ENCODE measurements at regions of chr12 and their contacts with region 1.

Region 1: GRCh38 chr12:26125400-26126339 is 833 bp upstream of the BHLHE41 start:
- DNase-seq: peak; percentile 53
- H3K4me3 Mint-ChIP-seq: peak overlapping the region; percentile 82
- H3K27ac Mint-ChIP-seq: no peak overlapping the region
- H3K4me1 Mint-ChIP-seq: peaks cover 23% of the 10 kb centered on the region
- H3K27me3 Mint-ChIP-seq: peaks cover 69% of the 10 kb centered on the region

Region 2: GRCh38 chr12:25958428-25959070 is 167.1 kb before region 1 on chr12 and contains the start of gene RASSF8:
- CTCF ChIA-PET with region 1: no interaction called
- intact Hi-C with region 1: loop called (anchors 2 kb)
- DNase-seq: peak; percentile 23
- H3K4me3 Mint-ChIP-seq: peak within 1 kb of the TSS; percentile 78
- H3K27ac Mint-ChIP-seq: no peak within 1 kb of the TSS
- H3K4me1 Mint-ChIP-seq: peaks cover 11% of the 10 kb centered on the region
- H3K27me3 Mint-ChIP-seq: peaks cover 58% of the 10 kb centered on the region
- total RNA-seq, gene RASSF8: 0.32 to 0.81 TPM

Region 3: GRCh38 chr12:26113853-26114719 is 11.6 kb before region 1 on chr12:
- CTCF ChIA-PET with region 1: interaction called, 5 read pairs
- intact Hi-C with region 1: loop called (anchors 1 kb)
- DNase-seq: peak; percentile 82
- H3K4me3 Mint-ChIP-seq: peak overlapping the region; percentile 68
- H3K27ac Mint-ChIP-seq: peak overlapping the region; percentile 22
- H3K4me1 Mint-ChIP-seq: peaks cover 6% of the 10 kb centered on the region
- H3K27me3 Mint-ChIP-seq: peaks cover 35% of the 10 kb centered on the region

Region 4: DNA sequence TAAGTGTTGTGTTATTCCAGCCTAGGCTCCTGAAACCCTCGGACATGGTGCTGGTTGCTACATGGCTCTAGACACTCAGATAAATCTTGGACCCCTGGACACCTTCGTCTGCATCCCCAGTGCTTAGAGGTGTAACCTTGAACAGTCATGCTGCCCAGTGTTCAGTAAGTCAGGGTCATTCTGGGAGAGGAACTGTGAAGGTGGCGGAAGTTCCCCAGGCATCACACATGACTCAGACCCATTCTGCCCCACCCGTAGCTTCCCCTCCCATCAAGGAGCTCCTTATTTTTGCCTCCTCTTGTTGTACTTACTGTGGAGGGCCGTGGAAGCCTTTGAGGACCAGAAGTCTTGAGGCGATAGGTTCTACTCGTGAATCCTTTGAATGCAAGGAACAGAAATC is 51.6 kb after region 1 on chr12:
- CTCF ChIA-PET with region 1: no interaction called
- intact Hi-C with region 1: no loop called
- DNase-seq: no peak
- H3K4me3 Mint-ChIP-seq: no peak overlapping the region
- H3K27ac Mint-ChIP-seq: no peak overlapping the region
- H3K4me1 Mint-ChIP-seq: no peaks in the 10 kb centered on the region
- H3K27me3 Mint-ChIP-seq: peaks cover 23% of the 10 kb centered on the region

Region 5: DNA sequence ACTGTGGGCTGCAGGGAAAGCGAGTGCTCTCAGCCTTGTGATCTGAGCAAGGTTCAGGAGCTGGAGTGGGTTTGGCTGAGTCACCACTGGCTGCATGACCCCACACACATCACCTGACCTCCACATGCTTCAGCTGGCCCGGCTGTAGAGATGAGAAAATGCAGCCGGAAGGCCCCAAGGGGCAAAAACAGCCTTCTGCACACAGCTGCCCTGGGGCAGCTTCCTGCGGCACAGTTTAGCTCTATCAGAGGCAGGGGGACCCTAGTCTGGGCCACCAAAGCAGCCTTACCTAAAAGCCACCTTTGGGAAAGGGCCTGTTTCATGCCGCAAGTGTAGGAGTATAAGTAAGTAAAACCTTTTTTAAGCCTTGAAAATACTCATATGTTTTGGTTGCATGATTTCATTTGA is 193.0 kb after region 1 on chr12:
- CTCF ChIA-PET with region 1: no interaction called
- intact Hi-C with region 1: loop called (anchors 5 kb)
- DNase-seq: no peak
- H3K4me3 Mint-ChIP-seq: no peak overlapping the region
- H3K27ac Mint-ChIP-seq: no peak overlapping the region
- H3K4me1 Mint-ChIP-seq: peaks cover 7% of the 10 kb centered on the region
- H3K27me3 Mint-ChIP-seq: peaks cover 23% of the 10 kb centered on the region

Region 6: GRCh38 chr12:26369588-26369987 is 243.9 kb after region 1 on chr12:
- CTCF ChIA-PET with region 1: no interaction called
- intact Hi-C with region 1: no loop called
- DNase-seq: no peak
- H3K4me3 Mint-ChIP-seq: no peak overlapping the region
- H3K27ac Mint-ChIP-seq: no peak overlapping the region
- H3K4me1 Mint-ChIP-seq: no peaks in the 10 kb centered on the region
- H3K27me3 Mint-ChIP-seq: no peaks in the 10 kb centered on the region

Region 7: GRCh38 chr12:26422839-26423398 is 297.2 kb after region 1 on chr12:
- CTCF ChIA-PET with region 1: no interaction called
- intact Hi-C with region 1: loop called (anchors 5 kb)
- DNase-seq: no peak
- H3K4me3 Mint-ChIP-seq: no peak overlapping the region
- H3K27ac Mint-ChIP-seq: no peak overlapping the region
- H3K4me1 Mint-ChIP-seq: no peaks in the 10 kb centered on the region
- H3K27me3 Mint-ChIP-seq: no peaks in the 10 kb centered on the region

Region 8: DNA sequence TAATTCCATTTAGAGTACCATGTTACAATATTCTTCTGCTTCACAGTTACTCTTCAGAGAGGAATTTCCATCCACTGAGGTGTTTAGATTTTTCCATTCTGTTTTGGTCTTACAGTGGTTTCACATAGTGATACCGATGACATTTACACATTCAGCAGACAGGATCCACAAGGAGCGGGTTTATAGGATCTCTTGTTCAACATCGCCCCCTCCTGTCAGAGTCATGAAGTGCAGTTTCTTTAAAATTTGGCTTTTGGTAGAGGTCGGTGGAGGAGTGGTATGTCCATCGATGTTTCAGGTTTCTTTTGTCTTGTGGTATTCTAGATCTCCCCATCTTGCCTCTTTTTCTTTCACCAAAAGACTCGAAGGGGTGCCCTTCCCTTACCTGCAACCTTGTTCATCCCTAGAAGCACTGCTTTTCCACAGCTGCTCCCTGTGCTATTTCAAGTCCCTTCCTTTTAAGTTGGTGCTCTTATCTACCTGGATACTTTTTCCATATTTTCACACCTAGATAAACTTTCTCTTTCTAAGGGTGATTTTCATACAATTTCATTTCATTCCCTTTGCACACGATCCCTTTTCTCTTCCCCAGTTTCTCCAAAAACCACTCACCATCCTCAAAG is 526.0 kb after region 1 on chr12:
- CTCF ChIA-PET with region 1: no interaction called
- intact Hi-C with region 1: loop called (anchors 2 kb)
- DNase-seq: peak; percentile 59
- H3K4me3 Mint-ChIP-seq: no peak overlapping the region
- H3K27ac Mint-ChIP-seq: no peak overlapping the region
- H3K4me1 Mint-ChIP-seq: no peaks in the 10 kb centered on the region
- H3K27me3 Mint-ChIP-seq: no peaks in the 10 kb centered on the region

Measured in activated naive CD4-positive, alpha-beta T cell treated with anti-CD3 and anti-CD28 coated beads for 36 hours (primary cell).